Mammary epithelial cell (primary cell): ENCODE measurements at regions of chr16 and their contacts with region 1.

Region 1: DNA sequence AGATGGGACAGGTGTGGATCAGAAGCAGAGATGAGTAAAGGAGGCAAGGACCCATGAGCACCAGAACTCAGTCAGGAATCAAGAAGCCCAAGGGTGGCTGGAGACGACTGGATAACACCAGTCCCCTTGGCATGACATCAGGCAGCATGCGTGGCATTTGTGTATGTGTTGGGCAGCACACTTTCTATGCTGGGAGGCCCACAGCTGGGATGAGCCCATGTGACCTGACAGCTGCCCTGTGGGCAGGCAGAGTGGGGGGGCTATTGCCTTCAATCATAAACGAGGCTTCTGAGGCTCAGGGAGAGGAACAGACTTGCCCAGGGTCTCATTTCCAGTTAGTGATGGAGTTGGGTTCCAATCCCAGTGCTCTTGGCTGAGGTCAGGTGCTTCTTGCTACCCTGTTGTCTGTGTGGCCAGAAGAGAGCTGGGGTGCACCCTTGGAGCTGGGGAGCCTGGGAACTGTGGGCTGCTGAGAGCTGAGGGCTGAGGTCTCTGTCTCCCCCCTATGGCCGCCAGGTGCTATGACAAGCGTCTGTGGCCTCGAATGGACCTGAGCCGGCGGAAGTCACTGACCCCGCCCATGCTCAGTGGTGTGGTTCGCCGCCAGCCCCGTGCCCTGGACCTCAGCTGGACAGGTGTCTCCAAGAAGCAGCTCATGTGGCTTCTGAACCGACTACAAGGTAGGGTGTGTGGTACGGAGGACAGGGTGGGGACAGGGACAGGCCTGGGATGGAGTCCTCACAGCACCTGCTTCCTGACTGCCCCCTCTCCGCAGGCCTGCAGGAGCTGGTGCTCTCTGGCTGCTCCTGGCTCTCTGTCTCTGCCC is 7.1 kb upstream of the ORAI3 start:
- DNase-seq: peak; percentile 67
- H3K4me3 ChIP-seq: no peak overlapping the region
- H3K27ac ChIP-seq: peak overlapping the region; percentile 11
- H3K4me1 ChIP-seq: peaks cover 24% of the 10 kb centered on the region
- H3K27me3 ChIP-seq: no peaks in the 10 kb centered on the region
- CTCF ChIP-seq: peak; percentile 97 to 98

Region 2: DNA sequence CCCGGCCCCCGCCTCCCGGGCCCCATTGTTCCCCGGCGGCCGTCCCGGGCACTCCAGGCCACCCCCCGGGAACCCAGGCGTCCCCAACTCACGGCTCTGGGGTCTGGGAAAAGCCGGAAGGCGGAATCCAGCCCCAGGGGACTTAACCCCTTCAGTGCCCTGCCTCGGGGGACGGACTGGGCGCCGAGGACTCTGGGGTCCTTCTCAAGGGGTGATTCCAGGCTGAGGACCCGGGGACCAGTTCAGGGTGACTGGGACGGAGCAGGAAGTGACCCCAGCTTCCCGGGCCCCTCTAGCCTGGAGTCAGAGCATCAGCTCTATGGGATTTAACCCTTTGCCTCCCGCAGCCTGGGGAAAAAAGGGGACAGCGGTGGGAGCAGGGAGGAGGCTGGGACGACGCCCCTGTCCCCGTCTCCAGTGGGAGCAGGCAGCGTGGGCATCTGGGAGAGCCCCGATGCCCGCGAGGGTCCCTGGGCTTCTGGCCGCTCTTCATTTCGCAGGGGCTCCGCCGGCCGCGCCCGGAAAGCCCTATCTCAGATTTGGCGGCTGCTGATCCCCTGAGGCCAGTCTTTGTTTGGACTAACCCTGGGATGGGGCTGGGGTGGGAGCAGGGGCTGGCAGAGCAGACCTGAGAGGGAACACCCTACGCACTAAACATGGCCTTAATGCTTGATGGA is 154.7 kb before region 1 on chr16 and contains the start of gene ZNF629:
- CTCF ChIA-PET with region 1: no interaction called
- dilution Hi-C with region 1: loop called (anchors 5 kb)
- in situ Hi-C with region 1: no loop called
- intact Hi-C with region 1: loop called (anchors 1 kb)
- DNase-seq: peak; percentile 49
- H3K4me3 ChIP-seq: peak within 1 kb of the TSS; percentile 72 to 87 (median 86)
- H3K27ac ChIP-seq: peak within 1 kb of the TSS; percentile 59
- H3K4me1 ChIP-seq: peaks cover 12% of the 10 kb centered on the region
- H3K27me3 ChIP-seq: no peaks in the 10 kb centered on the region
- CTCF ChIP-seq: no peak
- total RNA-seq, gene ZNF629: 13.6 to 19.2 TPM

Region 3: GRCh38 chr16:30844671-30845449 is 97.0 kb before region 1 on chr16:
- CTCF ChIA-PET with region 1: interaction called, 5 read pairs
- dilution Hi-C with region 1: no loop called
- in situ Hi-C with region 1: loop called in 1 of 2 experiments (anchors 10 kb)
- intact Hi-C with region 1: loop called (anchors 1 kb)
- DNase-seq: peak; percentile 68
- H3K4me3 ChIP-seq: no peak overlapping the region
- H3K27ac ChIP-seq: no peak overlapping the region
- H3K4me1 ChIP-seq: no peaks in the 10 kb centered on the region
- H3K27me3 ChIP-seq: no peaks in the 10 kb centered on the region
- CTCF ChIP-seq: peak; percentile 88 to 93

Region 4: DNA sequence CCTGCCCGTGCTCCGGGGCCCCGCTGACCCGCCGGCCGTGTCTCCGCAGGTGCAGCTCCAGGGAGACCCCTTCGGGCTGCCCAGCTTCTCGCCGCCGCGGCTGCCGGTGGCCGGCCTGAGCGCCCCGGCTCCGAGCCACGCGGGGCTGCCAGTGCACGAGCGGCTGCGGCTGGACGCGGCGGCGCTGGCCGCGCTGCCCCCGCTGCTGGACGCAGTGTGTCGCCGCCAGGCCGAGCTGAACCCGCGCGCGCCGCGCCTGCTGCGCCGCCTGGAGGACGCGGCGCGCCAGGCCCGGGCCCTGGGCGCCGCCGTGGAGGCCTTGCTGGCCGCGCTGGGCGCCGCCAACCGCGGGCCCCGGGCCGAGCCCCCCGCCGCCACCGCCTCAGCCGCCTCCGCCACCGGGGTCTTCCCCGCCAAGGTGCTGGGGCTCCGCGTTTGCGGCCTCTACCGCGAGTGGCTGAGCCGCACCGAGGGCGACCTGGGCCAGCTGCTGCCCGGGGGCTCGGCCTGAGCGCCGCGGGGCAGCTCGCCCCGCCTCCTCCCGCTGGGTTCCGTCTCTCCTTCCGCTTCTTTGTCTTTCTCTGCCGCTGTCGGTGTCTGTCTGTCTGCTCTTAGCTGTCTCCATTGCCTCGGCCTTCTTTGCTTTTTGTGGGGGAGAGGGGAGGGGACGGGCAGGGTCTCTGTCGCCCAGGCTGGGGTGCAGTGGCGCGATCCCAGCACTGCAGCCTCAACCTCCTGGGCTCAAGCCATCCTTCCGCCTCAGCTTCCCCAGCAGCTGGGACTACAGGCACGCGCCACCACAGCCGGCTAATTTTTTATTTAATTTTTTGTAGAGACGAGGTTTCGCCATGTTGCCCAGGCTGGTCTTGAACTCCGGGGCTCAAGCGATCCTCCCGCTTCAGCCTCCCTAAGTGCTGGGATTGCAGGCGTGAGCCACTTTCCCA is 39.5 kb before region 1 on chr16:
- CTCF ChIA-PET with region 1: no interaction called
- dilution Hi-C with region 1: no loop called
- in situ Hi-C with region 1: no loop called
- intact Hi-C with region 1: loop called (anchors 5 kb)
- DNase-seq: peak; percentile 31
- H3K4me3 ChIP-seq: peak overlapping the region; percentile 27 to 52 (median 51)
- H3K27ac ChIP-seq: no peak overlapping the region
- H3K4me1 ChIP-seq: peaks cover 4% of the 10 kb centered on the region
- H3K27me3 ChIP-seq: no peaks in the 10 kb centered on the region
- CTCF ChIP-seq: peak in 1 of 2 donors; percentile 23

Region 5: DNA sequence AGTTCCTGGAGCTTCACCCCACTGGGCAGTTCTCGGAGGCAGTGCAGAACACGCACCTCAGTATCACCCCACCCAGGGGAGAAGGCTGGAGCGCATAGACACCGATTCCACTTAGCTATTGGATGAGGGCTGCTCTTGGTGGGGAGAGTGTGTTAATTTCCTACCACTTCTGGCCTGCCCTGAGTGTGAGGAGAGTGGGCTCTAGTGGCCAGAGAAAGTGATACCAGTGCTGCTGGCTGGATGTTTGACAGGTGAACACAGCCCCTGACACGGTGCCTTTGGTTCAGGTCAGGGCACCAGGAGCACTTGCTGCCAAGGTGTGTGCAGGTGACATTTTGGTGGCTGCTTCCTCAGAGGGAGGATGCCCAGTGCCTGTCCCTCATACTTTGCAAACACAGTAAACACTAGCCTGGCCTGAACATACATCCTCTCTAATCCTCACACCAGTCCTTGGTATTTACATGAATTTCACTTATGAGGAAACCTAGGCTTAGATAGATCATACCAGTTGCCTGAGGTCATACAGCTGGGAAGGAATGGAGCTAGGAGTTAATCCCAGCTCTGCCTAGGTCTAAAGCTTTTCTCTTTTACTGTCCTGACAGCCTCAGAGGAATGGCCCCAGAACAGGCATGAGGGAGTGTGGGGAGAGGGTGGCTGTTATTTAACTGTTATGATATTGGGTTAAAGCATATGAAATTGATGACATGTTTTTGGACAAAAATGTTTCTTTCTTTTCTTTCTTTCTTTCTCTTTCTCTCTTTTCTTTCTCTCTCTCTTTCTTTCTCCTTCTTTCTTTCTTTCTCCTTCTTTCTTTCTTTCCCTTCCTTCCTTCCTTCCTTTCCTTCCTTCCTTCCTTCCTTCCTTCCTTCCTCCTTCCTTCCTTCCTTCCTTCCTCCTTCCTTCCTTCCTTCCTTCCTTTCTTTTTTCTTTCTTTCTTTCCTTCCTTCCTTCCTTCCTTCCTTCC is 392.2 kb after region 1 on chr16:
- CTCF ChIA-PET with region 1: no interaction called
- dilution Hi-C with region 1: no loop called
- in situ Hi-C with region 1: no loop called
- intact Hi-C with region 1: no loop called
- DNase-seq: peak; percentile 17
- H3K4me3 ChIP-seq: no peak overlapping the region
- H3K27ac ChIP-seq: no peak overlapping the region
- H3K4me1 ChIP-seq: peaks cover 6% of the 10 kb centered on the region
- H3K27me3 ChIP-seq: peaks cover 22% of the 10 kb centered on the region
- CTCF ChIP-seq: peak; percentile 37 to 63